Caco-2 (cell line): ENCODE measurements at regions of chr2 and their contacts with region 1.

Region 1: GRCh38 chr2:110812726-110813645 is 80.6 kb downstream of the ACOXL start:
- DNase-seq: no peak
- H3K4me3 ChIP-seq: no peak overlapping the region
- H3K4me3 Mint-ChIP-seq: no peak overlapping the region
- H3K27ac Mint-ChIP-seq: no peak overlapping the region
- H3K4me1 ChIP-seq: no peaks in the 10 kb centered on the region; the same call in 1 of the 2 replicates
- H3K4me1 Mint-ChIP-seq: no peaks in the 10 kb centered on the region
- H3K27me3 ChIP-seq: no peaks in the 10 kb centered on the region; the same call in 1 of the 2 replicates
- H3K27me3 Mint-ChIP-seq: peaks cover 5% of the 10 kb centered on the region
- CTCF ChIP-seq: no peak

Region 2: DNA sequence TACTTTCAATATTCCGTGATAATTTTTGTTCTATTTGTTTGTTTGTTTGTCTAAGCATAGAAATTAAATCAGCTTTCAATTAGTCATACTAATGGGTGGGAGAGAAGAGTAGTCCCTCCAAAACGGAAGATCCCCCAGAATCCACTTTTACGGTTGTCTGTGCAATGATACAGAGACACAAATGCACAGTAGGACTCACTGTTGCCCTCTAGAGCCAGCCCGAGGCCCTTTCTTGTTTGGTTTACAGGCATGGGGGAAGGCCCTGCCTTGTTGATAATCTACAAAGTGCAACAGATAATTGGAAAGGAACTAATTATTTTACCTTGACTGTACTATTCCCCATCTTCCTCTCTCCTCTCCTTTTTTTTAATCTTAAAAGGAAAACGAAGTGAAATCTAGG is 40.5 kb after region 1 on chr2:
- CTCF ChIA-PET with region 1: no interaction called
- POLR2A ChIA-PET with region 1: no interaction called
- intact Hi-C with region 1: loop called (anchors 2 kb)
- DNase-seq: peak; percentile 53 to 60
- H3K4me3 ChIP-seq: no peak overlapping the region
- H3K4me3 Mint-ChIP-seq: no peak overlapping the region
- H3K27ac Mint-ChIP-seq: no peak overlapping the region
- H3K4me1 ChIP-seq: no peaks in the 10 kb centered on the region
- H3K4me1 Mint-ChIP-seq: peaks cover 7% of the 10 kb centered on the region
- H3K27me3 ChIP-seq: no peaks in the 10 kb centered on the region
- H3K27me3 Mint-ChIP-seq: no peaks in the 10 kb centered on the region
- CTCF ChIP-seq: peak; percentile 47 to 66

Region 3: DNA sequence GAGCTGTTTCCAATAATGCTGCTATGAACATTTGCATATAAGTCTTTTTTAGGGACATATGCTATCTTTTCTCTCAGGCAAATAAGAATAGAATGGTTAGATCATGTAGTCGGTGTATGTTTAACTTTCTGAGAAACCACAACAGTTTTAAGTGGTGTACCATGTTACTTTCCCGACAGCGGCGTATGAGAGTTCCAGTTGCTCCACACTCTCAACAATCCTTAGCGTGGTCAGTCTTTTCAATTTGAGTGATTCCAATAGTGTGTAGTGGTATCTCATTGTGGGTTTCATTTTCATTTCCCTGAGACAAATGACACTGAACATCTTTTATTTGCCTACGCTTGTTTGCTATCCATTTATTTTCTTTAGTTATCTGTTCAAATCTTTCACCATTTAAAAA is 68.9 kb after region 1 on chr2:
- CTCF ChIA-PET with region 1: no interaction called
- POLR2A ChIA-PET with region 1: no interaction called
- intact Hi-C with region 1: no loop called
- DNase-seq: no peak
- H3K4me3 ChIP-seq: no peak overlapping the region
- H3K4me3 Mint-ChIP-seq: no peak overlapping the region
- H3K27ac Mint-ChIP-seq: no peak overlapping the region
- H3K4me1 ChIP-seq: no peaks in the 10 kb centered on the region
- H3K4me1 Mint-ChIP-seq: no peaks in the 10 kb centered on the region
- H3K27me3 ChIP-seq: no peaks in the 10 kb centered on the region
- H3K27me3 Mint-ChIP-seq: peaks cover 2% of the 10 kb centered on the region
- CTCF ChIP-seq: no peak

Region 4: DNA sequence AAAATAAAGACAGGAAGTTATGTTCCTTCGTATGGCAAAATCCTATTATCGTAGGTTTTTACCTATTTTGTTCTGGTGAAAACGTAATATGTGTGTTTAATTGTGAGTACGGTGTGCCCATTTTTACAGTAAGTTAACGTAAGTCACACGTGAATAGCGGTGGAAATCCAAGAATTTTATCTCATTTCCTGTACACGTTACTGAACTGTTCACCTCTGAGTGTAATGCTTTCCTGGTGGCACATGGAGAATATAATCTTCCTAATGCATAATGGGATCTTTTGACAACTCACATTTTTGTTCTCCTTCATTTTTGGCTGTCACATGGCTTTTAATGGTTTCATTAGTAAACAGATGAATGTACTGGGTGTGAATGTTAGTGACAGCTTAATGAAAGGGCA is 335.9 kb after region 1 on chr2:
- CTCF ChIA-PET with region 1: no interaction called
- POLR2A ChIA-PET with region 1: no interaction called
- intact Hi-C with region 1: no loop called
- DNase-seq: no peak
- H3K4me3 ChIP-seq: no peak overlapping the region
- H3K4me3 Mint-ChIP-seq: no peak overlapping the region
- H3K27ac Mint-ChIP-seq: no peak overlapping the region
- H3K4me1 ChIP-seq: no peaks in the 10 kb centered on the region
- H3K4me1 Mint-ChIP-seq: no peaks in the 10 kb centered on the region
- H3K27me3 ChIP-seq: no peaks in the 10 kb centered on the region
- H3K27me3 Mint-ChIP-seq: no peaks in the 10 kb centered on the region
- CTCF ChIP-seq: no peak